MCF 10A (cell line): ENCODE measurements at regions of chr11 and their contacts with region 1.

Region 1: GRCh38 chr11:23836981-23837380 is 659.9 kb upstream of the LUZP2 start:
- DNase-seq: no peak
- H3K4me3 Mint-ChIP-seq: no peak overlapping the region
- H3K27ac Mint-ChIP-seq: no peak overlapping the region
- H3K4me1 Mint-ChIP-seq: peaks cover 5% of the 10 kb centered on the region
- H3K27me3 Mint-ChIP-seq: no peaks in the 10 kb centered on the region
- CTCF ChIP-seq: no peak

Region 2: DNA sequence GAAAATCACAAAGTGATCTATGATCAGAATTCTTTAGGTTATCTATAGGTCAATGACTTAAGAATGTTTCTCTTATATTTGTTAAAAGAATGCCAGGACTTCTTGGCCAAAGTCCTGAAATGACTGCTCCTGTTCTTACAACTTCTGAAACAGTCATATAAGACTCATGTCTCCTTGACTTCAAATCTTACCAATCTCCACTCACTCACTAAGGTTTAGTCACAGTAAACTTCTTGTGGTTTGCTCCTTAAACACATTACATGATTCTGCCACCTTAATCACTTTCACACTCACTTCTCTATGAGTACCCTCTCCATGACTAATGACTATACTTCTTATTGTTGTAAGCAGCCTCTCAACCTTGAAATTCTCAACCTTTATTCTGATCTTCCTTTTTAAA is 328.0 kb before region 1 on chr11:
- CTCF ChIA-PET with region 1: no interaction called
- POLR2A ChIA-PET with region 1: no interaction called
- intact Hi-C with region 1: no loop called
- DNase-seq: no peak
- H3K4me3 Mint-ChIP-seq: no peak overlapping the region
- H3K27ac Mint-ChIP-seq: no peak overlapping the region
- H3K4me1 Mint-ChIP-seq: no peaks in the 10 kb centered on the region
- H3K27me3 Mint-ChIP-seq: peaks cover 11% of the 10 kb centered on the region
- CTCF ChIP-seq: no peak

Region 3: GRCh38 chr11:23719016-23719415 is 118.0 kb before region 1 on chr11:
- CTCF ChIA-PET with region 1: no interaction called
- POLR2A ChIA-PET with region 1: no interaction called
- intact Hi-C with region 1: no loop called
- DNase-seq: no peak
- H3K4me3 Mint-ChIP-seq: no peak overlapping the region
- H3K27ac Mint-ChIP-seq: no peak overlapping the region
- H3K4me1 Mint-ChIP-seq: no peaks in the 10 kb centered on the region
- H3K27me3 Mint-ChIP-seq: no peaks in the 10 kb centered on the region
- CTCF ChIP-seq: no peak

Region 4: GRCh38 chr11:24386546-24387397 is 549.8 kb after region 1 on chr11:
- CTCF ChIA-PET with region 1: no interaction called
- POLR2A ChIA-PET with region 1: no interaction called
- intact Hi-C with region 1: loop called (anchors 2 kb)
- DNase-seq: peak; percentile 32
- H3K4me3 Mint-ChIP-seq: no peak overlapping the region
- H3K27ac Mint-ChIP-seq: no peak overlapping the region
- H3K4me1 Mint-ChIP-seq: no peaks in the 10 kb centered on the region
- H3K27me3 Mint-ChIP-seq: peaks cover 9% of the 10 kb centered on the region
- CTCF ChIP-seq: peak; percentile 40